Activated CD4-positive, alpha-beta memory T cell treated with anti-CD3 and anti-CD28 coated beads for 36 hours (primary cell): ENCODE measurements at regions of chr7 and their contacts with region 1.

Region 1: DNA sequence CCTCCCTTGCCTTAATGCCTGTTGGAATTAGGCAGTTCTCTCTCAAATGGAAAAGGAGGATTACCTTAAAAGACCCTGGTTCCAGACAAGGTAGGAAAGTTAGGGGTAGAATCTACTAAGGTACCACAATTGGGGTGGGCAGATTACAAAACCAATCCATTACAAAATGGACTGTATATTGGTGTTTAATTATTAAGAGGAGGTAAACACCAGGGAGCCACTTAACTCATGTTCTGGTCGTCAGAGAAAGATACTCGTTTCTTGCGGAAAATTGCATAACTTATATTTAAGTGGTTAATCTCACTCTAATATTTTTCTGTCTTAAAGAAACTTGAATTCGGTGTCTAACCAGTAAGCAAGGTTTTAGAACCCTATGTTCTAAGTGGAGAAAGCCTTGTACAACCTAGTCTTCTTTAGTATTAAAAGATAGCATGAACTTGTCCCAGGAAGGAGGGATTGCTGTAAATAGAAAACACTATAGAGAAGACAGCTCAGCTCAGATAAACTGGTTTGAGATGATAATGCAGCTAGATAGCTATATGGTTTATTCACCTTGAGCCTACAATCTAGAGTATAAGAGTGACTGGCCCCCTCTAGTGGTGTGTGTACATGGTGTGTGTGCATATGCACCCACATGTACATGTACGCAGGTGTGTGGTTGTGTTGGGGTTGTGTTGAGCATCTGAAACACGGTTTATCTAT is 58.0 kb upstream of the STRIP2 start:
- DNase-seq: peak; percentile 68
- H3K4me3 Mint-ChIP-seq: no peak overlapping the region
- H3K27ac Mint-ChIP-seq: no peak overlapping the region
- H3K4me1 Mint-ChIP-seq: peaks cover 25% of the 10 kb centered on the region
- H3K27me3 Mint-ChIP-seq: no peaks in the 10 kb centered on the region

Region 2: DNA sequence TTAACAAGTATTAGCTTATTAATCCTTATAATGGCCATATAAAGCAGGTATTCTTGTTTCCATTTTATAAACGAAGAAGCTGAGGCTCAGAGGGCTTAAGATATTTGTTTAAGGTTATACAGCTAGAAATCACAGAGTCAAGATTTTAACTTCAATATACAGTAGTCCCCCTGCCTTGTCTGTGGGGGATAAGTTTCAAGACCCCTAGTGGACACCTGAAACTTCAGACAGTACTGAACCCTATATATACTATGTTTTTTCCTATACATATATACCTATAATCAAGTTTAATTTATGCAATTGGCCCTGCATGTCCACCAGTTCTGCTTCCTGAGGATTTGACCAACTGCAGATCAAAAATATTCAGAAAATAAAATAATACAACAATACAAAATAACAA is 13.6 kb after region 1 on chr7:
- CTCF ChIA-PET with region 1: interaction called, 47 read pairs
- POLR2A ChIA-PET with region 1: no interaction called
- intact Hi-C with region 1: no loop called
- DNase-seq: no peak
- H3K4me3 Mint-ChIP-seq: no peak overlapping the region
- H3K27ac Mint-ChIP-seq: no peak overlapping the region
- H3K4me1 Mint-ChIP-seq: peaks cover 8% of the 10 kb centered on the region
- H3K27me3 Mint-ChIP-seq: no peaks in the 10 kb centered on the region

Region 3: GRCh38 chr7:129401967-129402860 is 26.0 kb after region 1 on chr7:
- CTCF ChIA-PET with region 1: interaction called, 4 read pairs
- POLR2A ChIA-PET with region 1: no interaction called
- intact Hi-C with region 1: loop called (anchors 2 kb)
- DNase-seq: peak; percentile 56
- H3K4me3 Mint-ChIP-seq: no peak overlapping the region
- H3K27ac Mint-ChIP-seq: peak overlapping the region; percentile 29
- H3K4me1 Mint-ChIP-seq: peaks cover 37% of the 10 kb centered on the region
- H3K27me3 Mint-ChIP-seq: no peaks in the 10 kb centered on the region

Region 4: DNA sequence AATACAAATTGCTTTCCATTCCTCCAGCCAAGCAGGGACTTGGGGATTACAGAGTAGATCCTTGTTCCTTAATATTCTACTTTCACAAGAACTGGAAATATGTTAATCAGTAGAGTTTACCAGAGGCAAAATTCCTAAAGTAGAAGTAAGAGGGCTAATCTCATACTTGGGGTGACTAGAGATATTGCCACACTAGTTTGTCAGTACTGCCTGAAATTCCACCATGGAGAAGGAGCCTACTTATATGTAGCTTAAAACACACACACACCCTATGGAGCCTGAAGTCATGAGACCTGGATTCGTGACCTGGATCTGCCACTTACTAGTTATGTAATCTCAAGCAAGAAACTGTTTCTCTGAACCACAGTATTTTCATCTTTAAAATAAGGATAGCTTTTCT is 91.9 kb after region 1 on chr7:
- CTCF ChIA-PET with region 1: interaction called, 16 read pairs
- POLR2A ChIA-PET with region 1: no interaction called
- intact Hi-C with region 1: no loop called
- DNase-seq: no peak
- H3K4me3 Mint-ChIP-seq: no peak overlapping the region
- H3K27ac Mint-ChIP-seq: no peak overlapping the region
- H3K4me1 Mint-ChIP-seq: peaks cover 13% of the 10 kb centered on the region
- H3K27me3 Mint-ChIP-seq: no peaks in the 10 kb centered on the region

Region 5: GRCh38 chr7:130329681-130330080 is 953.5 kb after region 1 on chr7:
- CTCF ChIA-PET with region 1: no interaction called
- POLR2A ChIA-PET with region 1: no interaction called
- intact Hi-C with region 1: no loop called
- DNase-seq: no peak
- H3K4me3 Mint-ChIP-seq: no peak overlapping the region
- H3K27ac Mint-ChIP-seq: no peak overlapping the region
- H3K4me1 Mint-ChIP-seq: peaks cover 3% of the 10 kb centered on the region
- H3K27me3 Mint-ChIP-seq: no peaks in the 10 kb centered on the region